ENCODE measurements at regions of chr15 and their contacts with region 1.

Region 1: GRCh38 chr15:90648137-90649070 is 68.7 kb upstream of the BLM start:
- DNase-seq: peak; percentile 78
- H3K4me3 Mint-ChIP-seq: peak overlapping the region; percentile 20
- H3K27ac Mint-ChIP-seq: no peak overlapping the region
- H3K4me1 Mint-ChIP-seq: peaks cover 7% of the 10 kb centered on the region
- H3K27me3 Mint-ChIP-seq: no peaks in the 10 kb centered on the region
- CTCF ChIP-seq: peak; percentile 90

Region 2: GRCh38 chr15:90691982-90692773 is 43.8 kb after region 1 on chr15:
- CTCF ChIA-PET with region 1: interaction called, 15 read pairs
- POLR2A ChIA-PET with region 1: interaction called, 3 read pairs
- intact Hi-C with region 1: loop called (anchors 1 kb)
- DNase-seq: no peak
- H3K4me3 Mint-ChIP-seq: no peak overlapping the region
- H3K27ac Mint-ChIP-seq: no peak overlapping the region
- H3K4me1 Mint-ChIP-seq: no peaks in the 10 kb centered on the region
- H3K27me3 Mint-ChIP-seq: peaks cover 10% of the 10 kb centered on the region
- CTCF ChIP-seq: no peak

Region 3: DNA sequence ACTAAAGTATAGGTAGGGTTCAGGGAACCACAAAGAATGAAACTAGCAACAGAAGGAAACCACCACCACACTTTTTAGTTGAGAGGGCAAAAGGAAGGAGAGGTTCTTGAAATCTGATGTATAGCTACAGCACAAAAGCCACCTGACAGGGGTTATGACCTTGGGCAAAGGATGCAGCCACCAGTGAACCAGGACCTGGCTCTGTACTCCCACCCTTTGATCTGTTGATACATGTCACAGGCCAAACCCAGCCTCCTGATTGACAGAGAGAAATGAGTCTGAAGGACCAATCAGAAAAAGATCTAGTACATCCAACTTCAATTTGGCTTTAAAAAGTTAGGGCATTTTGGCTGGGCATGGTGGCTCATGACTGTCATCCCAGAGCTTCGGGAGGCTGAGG is 48.8 kb after region 1 on chr15:
- CTCF ChIA-PET with region 1: interaction called, 15 read pairs
- POLR2A ChIA-PET with region 1: interaction called, 3 read pairs
- intact Hi-C with region 1: loop called (anchors 1 kb)
- DNase-seq: no peak
- H3K4me3 Mint-ChIP-seq: no peak overlapping the region
- H3K27ac Mint-ChIP-seq: no peak overlapping the region
- H3K4me1 Mint-ChIP-seq: no peaks in the 10 kb centered on the region
- H3K27me3 Mint-ChIP-seq: peaks cover 10% of the 10 kb centered on the region
- CTCF ChIP-seq: no peak

Measured in MCF 10A (cell line).